Body of pancreas (tissue), 4 donors: ENCODE measurements at regions of chr6 and their contacts with region 1.

Region 1: DNA sequence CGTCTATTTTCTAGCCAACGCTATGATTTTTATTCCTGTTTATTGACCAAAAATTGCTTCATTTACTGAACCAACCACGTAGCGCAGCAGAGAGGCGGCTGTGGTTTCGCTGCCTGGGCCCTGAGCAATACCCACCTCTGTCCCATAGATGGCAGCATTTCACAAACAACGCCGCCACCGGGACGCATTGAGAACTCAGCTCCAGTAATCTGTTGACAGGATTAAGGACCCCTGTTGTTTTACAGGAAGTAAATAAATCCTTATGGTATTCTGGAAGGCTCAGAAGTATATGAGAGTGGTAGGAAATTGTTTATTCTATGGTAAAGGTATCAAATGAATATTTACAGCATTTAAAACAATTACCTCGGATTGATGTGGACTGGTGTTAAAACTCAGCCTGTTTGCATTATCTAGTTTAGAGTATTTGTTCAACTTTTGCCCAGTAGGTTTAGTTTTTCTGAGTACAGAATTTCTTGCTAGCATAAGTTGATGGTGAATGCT is 547.9 kb upstream of the SLC35B3 start:
- DNase-seq: peak; percentile 52 to 70 (median 56)
- ATAC-seq: peak; percentile 86
- H3K4me3 ChIP-seq: no peak overlapping the region
- H3K27ac ChIP-seq: no peak overlapping the region
- H3K4me1 ChIP-seq: peaks cover 6% of the 10 kb centered on the region
- H3K27me3 ChIP-seq: no peaks in the 10 kb centered on the region
- CTCF ChIP-seq: peak; percentile 77 to 99 (median 90)
- POLR2A ChIP-seq: no peak

Region 2: DNA sequence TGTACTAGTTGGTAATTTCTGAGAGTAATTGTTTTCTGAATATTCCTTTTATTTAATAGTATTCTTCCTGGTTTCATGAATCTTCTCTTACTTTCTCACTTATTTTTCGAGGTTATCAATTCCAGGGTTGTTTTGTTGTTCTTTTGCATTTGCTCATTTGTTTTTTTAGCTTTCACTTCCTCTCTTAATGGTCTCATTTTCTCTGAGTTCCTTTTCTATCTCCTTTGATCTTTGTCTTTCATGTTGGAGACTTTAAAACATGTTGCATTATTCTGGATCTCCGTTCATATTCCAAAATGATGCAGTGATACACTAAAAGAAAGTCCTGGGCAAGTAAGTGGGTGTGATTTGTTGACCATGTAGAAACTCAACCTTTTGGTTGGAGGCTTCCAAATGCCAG is 202.6 kb before region 1 on chr6:
- intact Hi-C with region 1: no loop called
- DNase-seq: no peak
- ATAC-seq: no peak
- H3K4me3 ChIP-seq: no peak overlapping the region
- H3K27ac ChIP-seq: no peak overlapping the region
- H3K4me1 ChIP-seq: no peaks in the 10 kb centered on the region
- H3K27me3 ChIP-seq: no peaks in the 10 kb centered on the region
- CTCF ChIP-seq: no peak
- POLR2A ChIP-seq: no peak

Region 3: DNA sequence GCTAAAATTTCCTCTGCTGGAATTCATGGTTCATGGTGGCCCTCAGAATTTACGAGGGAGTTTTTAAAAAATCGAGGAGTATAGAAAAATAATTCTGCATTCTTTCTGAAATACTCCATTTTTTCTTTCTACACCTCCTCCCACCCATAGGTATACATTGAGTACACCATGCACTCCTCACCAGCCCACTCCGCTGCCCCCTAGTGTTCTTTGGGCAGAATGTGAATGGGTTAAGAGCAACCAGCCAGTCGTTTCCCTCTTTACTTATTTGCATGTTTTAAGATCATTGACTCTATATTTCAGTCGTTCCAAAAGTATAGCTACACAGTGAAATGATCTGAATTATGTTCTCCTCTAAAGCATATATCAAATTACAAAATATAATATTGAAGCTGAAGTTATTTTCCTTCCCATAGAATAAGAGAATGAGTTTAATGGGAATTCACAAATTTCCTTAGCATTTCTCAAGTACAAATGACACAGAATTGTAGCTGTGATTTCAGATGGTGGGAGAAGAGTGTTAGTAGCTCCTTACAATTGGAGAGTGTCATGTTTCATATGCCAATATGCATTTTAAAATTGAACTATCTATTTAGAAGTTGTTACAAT is 429.8 kb after region 1 on chr6:
- intact Hi-C with region 1: loop called (anchors 10 kb)
- DNase-seq: peak; percentile 47 to 62 (median 52)
- ATAC-seq: peak; percentile 60
- H3K4me3 ChIP-seq: no peak overlapping the region
- H3K27ac ChIP-seq: no peak overlapping the region
- H3K4me1 ChIP-seq: peaks cover 8% of the 10 kb centered on the region
- H3K27me3 ChIP-seq: no peaks in the 10 kb centered on the region
- CTCF ChIP-seq: peak; percentile 20 to 66 (median 57)
- POLR2A ChIP-seq: no peak

Region 4: DNA sequence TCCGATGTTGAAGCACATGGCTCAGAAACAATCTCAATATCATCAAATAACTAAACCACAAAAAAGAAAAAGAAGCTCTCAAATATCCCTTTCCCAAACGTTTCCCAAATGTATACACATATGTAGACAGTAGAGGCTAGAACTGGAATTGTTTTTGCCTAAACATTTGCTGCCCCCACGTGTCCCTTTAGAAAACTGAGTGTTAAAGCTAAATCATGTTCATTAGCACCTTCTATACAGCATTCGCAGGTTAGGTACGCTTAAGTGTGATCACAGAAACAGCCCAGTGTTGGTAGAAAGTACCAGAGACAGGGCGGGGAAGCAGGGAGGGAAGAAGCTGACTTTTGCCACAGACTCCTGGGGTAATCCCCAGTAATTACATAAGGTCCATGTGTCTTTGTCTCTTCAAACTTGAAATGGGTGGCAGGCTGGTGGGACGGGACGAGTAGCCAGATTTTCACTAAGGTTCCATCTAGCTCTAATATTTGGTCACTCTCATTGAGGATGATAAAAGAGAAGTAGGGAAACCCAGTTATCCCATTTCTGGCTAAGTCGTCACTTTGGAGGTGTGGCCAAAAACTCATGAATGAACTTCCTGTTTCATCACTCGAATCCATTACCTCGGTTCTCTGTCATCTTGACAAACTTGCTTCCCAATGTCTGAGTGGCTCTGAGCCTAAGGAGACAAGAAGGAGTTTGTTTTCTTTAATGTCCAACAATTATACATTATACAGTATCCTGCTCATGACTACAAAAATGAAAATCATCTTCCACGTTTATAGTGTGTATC is 1446.6 kb after region 1 on chr6:
- intact Hi-C with region 1: loop called (anchors 10 kb)
- DNase-seq: peak in 3 of 4 donors; percentile 37 to 49 (median 45)
- ATAC-seq: peak; percentile 60
- H3K4me3 ChIP-seq: no peak overlapping the region
- H3K27ac ChIP-seq: no peak overlapping the region
- H3K4me1 ChIP-seq: peaks cover 12% of the 10 kb centered on the region
- H3K27me3 ChIP-seq: peaks cover 0 to 16% of the 10 kb centered on the region in 2 donors
- CTCF ChIP-seq: peak in 6 of 7 experiments; percentile 35 to 78 (median 66)
- POLR2A ChIP-seq: no peak